ENCODE measurements at regions of chr10 and their contacts with region 1.

Region 1: GRCh38 chr10:97714048-97714371 is 480 bp downstream of the MARVELD1 start:
- DNase-seq: peak; percentile 81
- H3K4me3 ChIP-seq: peak overlapping the region; percentile 14 to 62 (median 28)
- H3K27ac ChIP-seq: peak overlapping the region; percentile 39
- H3K4me1 ChIP-seq: peaks cover 22% of the 10 kb centered on the region
- H3K27me3 ChIP-seq: no peaks in the 10 kb centered on the region
- CTCF ChIP-seq: peak; percentile 7 to 29
- POLR2A ChIP-seq: peak; percentile 35

Region 2: GRCh38 chr10:97676770-97677581 is 37.0 kb before region 1 on chr10:
- CTCF ChIA-PET with region 1: interaction called, 69 read pairs
- POLR2A ChIA-PET with region 1: no interaction called
- dilution Hi-C with region 1: no loop called
- intact Hi-C with region 1: no loop called
- DNase-seq: peak; percentile 61
- H3K4me3 ChIP-seq: no peak overlapping the region
- H3K27ac ChIP-seq: no peak overlapping the region
- H3K4me1 ChIP-seq: peaks cover 3% of the 10 kb centered on the region
- H3K27me3 ChIP-seq: no peaks in the 10 kb centered on the region
- CTCF ChIP-seq: peak; percentile 78 to 80
- POLR2A ChIP-seq: peak; percentile 15

Region 3: GRCh38 chr10:97701438-97702069 is 12.5 kb before region 1 on chr10:
- CTCF ChIA-PET with region 1: interaction called, 863 read pairs
- POLR2A ChIA-PET with region 1: no interaction called
- dilution Hi-C with region 1: no loop called
- intact Hi-C with region 1: no loop called
- DNase-seq: peak; percentile 70
- H3K4me3 ChIP-seq: no peak overlapping the region
- H3K27ac ChIP-seq: no peak overlapping the region
- H3K4me1 ChIP-seq: no peaks in the 10 kb centered on the region
- H3K27me3 ChIP-seq: peaks cover 2 to 6% of the 10 kb centered on the region in 2 experiments
- CTCF ChIP-seq: peak; percentile 79 to 85
- POLR2A ChIP-seq: no peak

Region 4: DNA sequence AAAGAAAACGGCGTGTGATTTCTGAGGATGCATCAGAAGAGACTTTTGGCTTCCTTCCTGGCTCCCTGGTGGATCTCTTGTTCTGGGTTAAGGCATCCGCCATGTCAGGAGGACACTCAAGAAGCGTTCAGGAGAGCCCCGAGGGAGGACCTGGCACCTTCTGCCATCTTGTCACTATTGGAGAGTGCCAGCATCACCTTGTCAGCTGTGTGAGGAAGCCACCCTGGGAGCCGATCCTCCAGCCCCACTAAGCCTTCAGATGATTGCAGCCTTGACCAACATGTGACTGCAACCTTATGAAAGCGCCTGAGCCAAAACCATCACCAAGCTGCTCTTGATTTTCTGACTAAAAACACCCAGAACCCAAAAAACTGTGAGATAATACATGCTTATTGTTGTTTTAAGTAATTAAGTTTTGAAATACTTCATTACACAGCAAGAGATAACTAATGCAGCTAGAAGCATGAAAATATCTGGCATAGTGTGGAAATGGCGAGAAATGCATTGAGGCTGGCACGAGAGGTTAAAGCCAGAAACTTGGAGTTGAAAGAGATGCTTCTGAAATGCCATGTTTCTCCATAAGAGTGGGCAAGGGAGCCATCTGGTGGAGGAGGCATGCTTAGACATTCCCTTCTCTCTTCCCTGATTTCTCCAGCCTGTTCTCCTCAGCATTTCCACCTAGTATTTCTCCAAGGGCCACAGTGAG is 17.5 kb after region 1 on chr10:
- CTCF ChIA-PET with region 1: interaction called, 863 read pairs
- POLR2A ChIA-PET with region 1: interaction called, 5 read pairs
- dilution Hi-C with region 1: no loop called
- intact Hi-C with region 1: loop called (anchors 1 kb)
- DNase-seq: peak; percentile 79
- H3K4me3 ChIP-seq: no peak overlapping the region
- H3K27ac ChIP-seq: no peak overlapping the region
- H3K4me1 ChIP-seq: peaks cover 6% of the 10 kb centered on the region
- H3K27me3 ChIP-seq: no peaks in the 10 kb centered on the region
- CTCF ChIP-seq: peak; percentile 82
- POLR2A ChIP-seq: no peak

Region 5: GRCh38 chr10:97736902-97737769 is 23.1 kb after region 1 on chr10 and contains the start of gene ZFYVE27:
- CTCF ChIA-PET with region 1: interaction called, 863 read pairs
- POLR2A ChIA-PET with region 1: interaction called, 3 read pairs
- dilution Hi-C with region 1: no loop called
- intact Hi-C with region 1: no loop called
- DNase-seq: peak; percentile 95
- H3K4me3 ChIP-seq: peak within 1 kb of the TSS; percentile 46 to 72 (median 63)
- H3K27ac ChIP-seq: peak within 1 kb of the TSS; percentile 37
- H3K4me1 ChIP-seq: peaks cover 8% of the 10 kb centered on the region
- H3K27me3 ChIP-seq: no peaks in the 10 kb centered on the region
- CTCF ChIP-seq: no peak
- POLR2A ChIP-seq: peak; percentile 93
- total RNA-seq, gene ZFYVE27: 23.7 and 24.2 TPM in 2 replicates

Region 6: GRCh38 chr10:97743169-97743943 is 29.3 kb after region 1 on chr10:
- CTCF ChIA-PET with region 1: interaction called, 12 read pairs
- POLR2A ChIA-PET with region 1: no interaction called
- dilution Hi-C with region 1: no loop called
- intact Hi-C with region 1: no loop called
- DNase-seq: no peak
- H3K4me3 ChIP-seq: no peak overlapping the region
- H3K27ac ChIP-seq: no peak overlapping the region
- H3K4me1 ChIP-seq: peaks cover under 1% of the 10 kb centered on the region
- H3K27me3 ChIP-seq: no peaks in the 10 kb centered on the region
- CTCF ChIP-seq: no peak
- POLR2A ChIP-seq: no peak